ENCODE measurements at regions of chr1 and their contacts with region 1.

Region 1: GRCh38 chr1:205354259-205354904 is 2.3 kb downstream of the KLHDC8A start:
- DNase-seq: peak; percentile 30 to 81 (median 67)
- ATAC-seq: peak; percentile 87
- H3K4me3 ChIP-seq: no peak overlapping the region
- H3K4me3 Mint-ChIP-seq: no peak overlapping the region
- H3K27ac ChIP-seq: no peak overlapping the region
- H3K27ac Mint-ChIP-seq: no peak overlapping the region
- H3K4me1 ChIP-seq: no peaks in the 10 kb centered on the region
- H3K4me1 Mint-ChIP-seq: no peaks in the 10 kb centered on the region
- H3K27me3 ChIP-seq: no peaks in the 10 kb centered on the region
- H3K27me3 Mint-ChIP-seq: peaks cover 16% of the 10 kb centered on the region
- CTCF ChIP-seq: peak; percentile 97

Region 2: GRCh38 chr1:205321164-205321958 is 33.0 kb before region 1 on chr1 and contains the start of gene NUAK2:
- CTCF ChIA-PET with region 1: interaction called, 21 read pairs
- POLR2A ChIA-PET with region 1: no interaction called
- intact Hi-C with region 1: no loop called
- DNase-seq: peak; percentile 56 to 92 (median 86)
- ATAC-seq: peak; percentile 88
- H3K4me3 ChIP-seq: peak within 1 kb of the TSS; percentile 73 to 99
- H3K4me3 Mint-ChIP-seq: peak within 1 kb of the TSS; percentile 98
- H3K27ac ChIP-seq: peak within 1 kb of the TSS; percentile 68 to 72
- H3K27ac Mint-ChIP-seq: peak within 1 kb of the TSS; percentile 96
- H3K4me1 ChIP-seq: peaks cover 50% of the 10 kb centered on the region
- H3K4me1 Mint-ChIP-seq: peaks cover 71% of the 10 kb centered on the region
- H3K27me3 ChIP-seq: no peaks in the 10 kb centered on the region
- H3K27me3 Mint-ChIP-seq: no peaks in the 10 kb centered on the region
- CTCF ChIP-seq: peak; percentile 32
- total RNA-seq, gene NUAK2: 17.1 to 18.3 TPM

Region 3: DNA sequence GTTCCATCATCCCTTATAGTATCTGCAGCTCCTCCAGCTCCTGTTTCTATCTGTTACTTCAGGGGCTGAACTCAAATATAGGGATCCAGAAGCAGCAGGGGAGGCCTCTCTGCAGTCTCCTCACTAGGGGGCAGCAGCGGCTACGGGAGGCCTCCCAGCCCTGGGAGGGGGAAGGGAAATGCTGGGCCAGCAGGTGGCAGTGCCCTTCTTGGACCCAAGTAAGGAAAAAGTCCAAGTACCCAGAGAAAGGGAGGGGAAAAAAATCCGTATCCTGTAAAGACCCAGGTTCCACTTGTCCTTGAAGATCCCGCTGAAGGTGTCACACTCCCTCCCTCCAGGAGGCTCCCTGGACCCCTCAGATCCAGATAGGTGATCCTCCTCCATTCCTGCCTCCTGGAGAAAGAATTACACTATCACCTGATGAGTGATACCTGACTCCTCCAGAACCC is 18.7 kb before region 1 on chr1:
- CTCF ChIA-PET with region 1: interaction called, 28 read pairs
- POLR2A ChIA-PET with region 1: no interaction called
- intact Hi-C with region 1: loop called in 1 of 2 experiments (anchors 1 kb)
- DNase-seq: peak; percentile 52 to 86 (median 80)
- ATAC-seq: peak; percentile 99
- H3K4me3 ChIP-seq: no peak overlapping the region
- H3K4me3 Mint-ChIP-seq: no peak overlapping the region
- H3K27ac ChIP-seq: no peak overlapping the region
- H3K27ac Mint-ChIP-seq: no peak overlapping the region
- H3K4me1 ChIP-seq: no peaks in the 10 kb centered on the region
- H3K4me1 Mint-ChIP-seq: no peaks in the 10 kb centered on the region
- H3K27me3 ChIP-seq: no peaks in the 10 kb centered on the region
- H3K27me3 Mint-ChIP-seq: no peaks in the 10 kb centered on the region
- CTCF ChIP-seq: peak; percentile 85

Region 4: DNA sequence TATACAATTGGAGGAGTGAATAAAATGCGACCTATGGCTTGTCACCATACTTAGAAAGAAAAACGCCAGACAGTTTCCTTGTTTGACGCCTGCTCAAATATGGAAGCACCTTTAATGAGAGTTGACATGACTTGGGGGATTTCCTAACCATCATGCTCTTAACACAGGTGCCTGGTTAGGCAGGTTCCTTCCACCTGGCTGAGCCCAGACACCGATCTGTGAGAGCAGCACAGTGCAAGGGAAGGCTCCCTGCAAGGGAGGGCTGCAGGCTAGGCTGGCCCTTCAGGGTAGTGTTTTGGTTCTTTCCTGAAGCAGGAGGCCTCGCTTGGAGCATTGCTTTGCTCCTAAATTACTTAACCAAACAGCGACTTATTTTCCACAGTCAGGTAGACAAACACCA is 26.9 kb after region 1 on chr1:
- CTCF ChIA-PET with region 1: interaction called, 10 read pairs
- POLR2A ChIA-PET with region 1: no interaction called
- intact Hi-C with region 1: no loop called
- DNase-seq: no peak
- ATAC-seq: no peak
- H3K4me3 ChIP-seq: no peak overlapping the region
- H3K4me3 Mint-ChIP-seq: no peak overlapping the region
- H3K27ac ChIP-seq: no peak overlapping the region
- H3K27ac Mint-ChIP-seq: no peak overlapping the region
- H3K4me1 ChIP-seq: no peaks in the 10 kb centered on the region
- H3K4me1 Mint-ChIP-seq: no peaks in the 10 kb centered on the region
- H3K27me3 ChIP-seq: peaks cover 0 to 6% of the 10 kb centered on the region in 2 experiments
- H3K27me3 Mint-ChIP-seq: peaks cover 16% of the 10 kb centered on the region
- CTCF ChIP-seq: no peak

Region 5: DNA sequence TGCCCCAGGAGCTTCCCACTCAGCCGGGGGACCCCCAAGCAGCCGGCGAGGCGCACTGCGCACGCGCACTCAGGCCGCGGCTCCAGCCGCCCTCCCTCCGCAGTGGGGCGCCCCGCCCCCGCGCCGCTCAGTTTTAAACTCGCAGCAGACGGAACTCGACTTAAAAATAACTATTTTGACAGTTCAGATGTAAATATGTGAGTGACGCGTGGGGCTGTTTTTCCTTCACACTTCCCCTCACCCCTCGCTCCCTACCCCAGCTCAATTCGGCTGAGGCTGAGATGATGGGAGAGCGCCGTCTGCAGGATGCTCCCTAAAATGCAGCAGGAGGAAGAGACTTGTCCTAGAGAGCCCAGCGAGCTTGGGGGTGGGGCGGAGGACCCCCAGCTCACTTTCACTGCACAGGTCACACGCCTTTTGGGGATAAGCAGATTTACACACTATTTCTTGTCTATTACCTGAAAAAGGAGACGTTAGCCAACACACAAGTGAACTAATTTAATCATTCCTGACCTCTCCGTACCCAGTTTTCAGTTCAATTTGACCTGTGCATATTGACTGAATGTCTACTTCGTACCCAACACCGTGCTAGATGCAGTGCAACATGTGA is 76.4 kb after region 1 on chr1:
- CTCF ChIA-PET with region 1: interaction called, 7 read pairs
- POLR2A ChIA-PET with region 1: no interaction called
- intact Hi-C with region 1: loop called (anchors 2 to 10 kb)
- DNase-seq: peak; percentile 27 to 79 (median 64)
- ATAC-seq: peak; percentile 90
- H3K4me3 ChIP-seq: peak overlapping the region; percentile 26 to 37
- H3K4me3 Mint-ChIP-seq: peak overlapping the region; percentile 86
- H3K27ac ChIP-seq: no peak overlapping the region
- H3K27ac Mint-ChIP-seq: no peak overlapping the region
- H3K4me1 ChIP-seq: peaks cover 6% of the 10 kb centered on the region
- H3K4me1 Mint-ChIP-seq: peaks cover 10% of the 10 kb centered on the region
- H3K27me3 ChIP-seq: no peaks in the 10 kb centered on the region
- H3K27me3 Mint-ChIP-seq: no peaks in the 10 kb centered on the region
- CTCF ChIP-seq: peak; percentile 58

Region 6: GRCh38 chr1:205477759-205478247 is 123.4 kb after region 1 on chr1:
- CTCF ChIA-PET with region 1: interaction called, 123 read pairs
- POLR2A ChIA-PET with region 1: no interaction called
- intact Hi-C with region 1: no loop called
- DNase-seq: no peak
- ATAC-seq: no peak
- H3K4me3 ChIP-seq: no peak overlapping the region
- H3K4me3 Mint-ChIP-seq: no peak overlapping the region
- H3K27ac ChIP-seq: no peak overlapping the region
- H3K27ac Mint-ChIP-seq: no peak overlapping the region
- H3K4me1 ChIP-seq: peaks cover 27% of the 10 kb centered on the region
- H3K4me1 Mint-ChIP-seq: peaks cover 31% of the 10 kb centered on the region
- H3K27me3 ChIP-seq: peaks cover 0 to 4% of the 10 kb centered on the region in 2 experiments
- H3K27me3 Mint-ChIP-seq: peaks cover 29% of the 10 kb centered on the region
- CTCF ChIP-seq: no peak